Activated CD8-positive, alpha-beta T cell treated with anti-CD3 and anti-CD28 coated beads for 36 hours (primary cell): ENCODE measurements at regions of chr6 and their contacts with region 1.

Region 1: DNA sequence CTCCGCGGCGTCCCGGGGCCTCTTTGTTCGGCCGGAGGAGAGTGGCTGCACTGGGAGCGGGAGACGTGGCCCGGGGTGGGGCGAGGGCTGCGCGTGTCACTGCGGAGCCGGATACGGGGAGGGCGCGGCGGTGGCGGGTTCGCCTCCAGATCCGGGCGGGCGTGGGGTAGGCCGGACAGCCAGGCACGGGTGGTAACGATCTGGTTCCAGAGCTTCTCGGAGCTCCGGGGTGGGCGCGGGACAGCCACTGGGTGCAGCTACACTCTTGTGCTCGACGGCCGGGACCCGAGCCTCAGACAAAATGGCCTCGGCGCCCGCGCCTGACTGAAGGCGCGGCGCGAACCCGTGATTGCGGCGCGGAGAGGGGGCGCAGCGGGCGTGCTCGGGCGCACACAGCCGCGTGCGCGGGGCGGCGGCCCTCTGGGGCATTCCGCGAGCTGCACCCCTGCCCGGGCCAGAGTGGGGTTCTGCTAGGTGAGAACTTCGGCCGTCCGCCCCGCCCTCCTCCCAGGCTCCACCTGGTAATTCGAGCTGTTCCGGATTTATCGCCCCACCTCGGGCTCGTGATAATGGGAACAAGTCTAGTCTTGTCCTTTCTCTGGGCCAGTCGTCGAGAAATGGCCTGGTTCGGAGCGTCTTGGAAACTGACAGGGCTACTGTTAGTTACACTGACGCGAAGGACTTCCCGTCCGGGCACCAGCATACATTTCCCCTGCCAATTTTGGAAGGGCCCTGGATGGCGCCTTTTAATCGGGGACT is 1.0 kb downstream of the LOC128125822 start:
- DNase-seq: peak; percentile 70
- ATAC-seq: peak; percentile 28
- H3K4me3 Mint-ChIP-seq: peak overlapping the region; percentile 93
- H3K27ac Mint-ChIP-seq: peak overlapping the region; percentile 95
- H3K4me1 Mint-ChIP-seq: peaks cover 22% of the 10 kb centered on the region
- H3K27me3 Mint-ChIP-seq: no peaks in the 10 kb centered on the region
- CTCF ChIP-seq: no peak

Region 2: DNA sequence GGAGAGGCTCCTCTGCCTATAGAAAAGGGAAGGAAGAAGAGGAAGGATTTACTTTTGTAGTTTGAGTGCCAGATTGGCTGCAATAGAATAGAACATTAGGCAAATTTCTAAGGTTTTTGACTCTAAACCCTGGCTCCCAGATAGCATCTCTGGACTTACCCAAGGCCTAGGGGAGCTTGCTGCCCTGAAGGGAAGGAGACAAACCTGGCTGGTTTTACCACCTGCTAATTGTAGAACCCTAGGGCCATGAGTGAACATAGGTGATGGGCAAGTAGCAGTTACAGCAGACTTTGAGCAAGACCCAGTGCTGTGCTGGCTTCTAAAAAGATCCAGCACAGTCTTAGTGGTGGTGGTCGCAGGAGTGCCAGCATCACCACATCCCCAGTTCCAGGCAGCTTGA is 667.7 kb before region 1 on chr6:
- CTCF ChIA-PET with region 1: no interaction called
- POLR2A ChIA-PET with region 1: no interaction called
- intact Hi-C with region 1: no loop called
- DNase-seq: no peak
- ATAC-seq: no peak
- H3K4me3 Mint-ChIP-seq: no peak overlapping the region
- H3K27ac Mint-ChIP-seq: no peak overlapping the region
- H3K4me1 Mint-ChIP-seq: no peaks in the 10 kb centered on the region
- H3K27me3 Mint-ChIP-seq: no peaks in the 10 kb centered on the region
- CTCF ChIP-seq: no peak

Region 3: GRCh38 chr6:63537126-63537958 is 36.0 kb before region 1 on chr6:
- CTCF ChIA-PET with region 1: no interaction called
- POLR2A ChIA-PET with region 1: no interaction called
- intact Hi-C with region 1: no loop called
- DNase-seq: no peak
- ATAC-seq: no peak
- H3K4me3 Mint-ChIP-seq: no peak overlapping the region
- H3K27ac Mint-ChIP-seq: no peak overlapping the region
- H3K4me1 Mint-ChIP-seq: no peaks in the 10 kb centered on the region
- H3K27me3 Mint-ChIP-seq: peaks cover 10% of the 10 kb centered on the region
- CTCF ChIP-seq: no peak

Region 4: DNA sequence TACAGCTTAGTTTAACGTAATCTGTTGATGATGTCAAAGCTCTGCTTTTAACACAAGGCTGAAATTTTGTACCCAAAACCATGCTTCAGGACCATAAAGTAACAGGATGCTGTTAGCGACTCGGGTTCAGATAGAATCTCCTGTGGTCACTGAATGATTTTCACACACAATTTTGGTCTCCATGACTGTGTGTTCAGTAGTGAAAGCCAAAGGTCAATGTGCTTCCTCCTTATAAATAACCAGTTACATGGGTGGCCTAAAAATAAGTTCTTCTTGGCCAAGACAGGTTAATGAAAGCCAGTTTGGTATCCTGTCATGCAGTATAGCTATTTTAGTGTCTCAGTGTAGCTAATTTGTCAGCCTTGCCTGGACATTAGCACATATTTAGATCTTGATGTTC is 20.1 kb before region 1 on chr6:
- CTCF ChIA-PET with region 1: no interaction called
- POLR2A ChIA-PET with region 1: no interaction called
- intact Hi-C with region 1: no loop called
- DNase-seq: no peak
- ATAC-seq: peak; percentile 51
- H3K4me3 Mint-ChIP-seq: no peak overlapping the region
- H3K27ac Mint-ChIP-seq: no peak overlapping the region
- H3K4me1 Mint-ChIP-seq: no peaks in the 10 kb centered on the region
- H3K27me3 Mint-ChIP-seq: peaks cover 13% of the 10 kb centered on the region
- CTCF ChIP-seq: no peak

Region 5: GRCh38 chr6:63584125-63584514 is 10.8 kb after region 1 on chr6:
- CTCF ChIA-PET with region 1: interaction called, 17 read pairs
- POLR2A ChIA-PET with region 1: interaction called, 6 read pairs
- intact Hi-C with region 1: no loop called
- DNase-seq: no peak
- ATAC-seq: no peak
- H3K4me3 Mint-ChIP-seq: no peak overlapping the region
- H3K27ac Mint-ChIP-seq: no peak overlapping the region
- H3K4me1 Mint-ChIP-seq: no peaks in the 10 kb centered on the region
- H3K27me3 Mint-ChIP-seq: no peaks in the 10 kb centered on the region
- CTCF ChIP-seq: no peak

Region 6: GRCh38 chr6:63635588-63636517 is 62.5 kb after region 1 on chr6 and contains the start of gene PHF3:
- CTCF ChIA-PET with region 1: interaction called, 16 read pairs
- POLR2A ChIA-PET with region 1: interaction called, 18 read pairs
- intact Hi-C with region 1: no loop called
- DNase-seq: peak; percentile 91
- ATAC-seq: peak; percentile 94
- H3K4me3 Mint-ChIP-seq: peak within 1 kb of the TSS; percentile 88
- H3K27ac Mint-ChIP-seq: peak within 1 kb of the TSS; percentile 93
- H3K4me1 Mint-ChIP-seq: peaks cover 38% of the 10 kb centered on the region
- H3K27me3 Mint-ChIP-seq: no peaks in the 10 kb centered on the region
- CTCF ChIP-seq: peak; percentile 11
- total RNA-seq, gene PHF3: 45.6 to 50.3 TPM